GM12878 (cell line): ENCODE measurements at regions of chr14 and their contacts with region 1.

Region 1: DNA sequence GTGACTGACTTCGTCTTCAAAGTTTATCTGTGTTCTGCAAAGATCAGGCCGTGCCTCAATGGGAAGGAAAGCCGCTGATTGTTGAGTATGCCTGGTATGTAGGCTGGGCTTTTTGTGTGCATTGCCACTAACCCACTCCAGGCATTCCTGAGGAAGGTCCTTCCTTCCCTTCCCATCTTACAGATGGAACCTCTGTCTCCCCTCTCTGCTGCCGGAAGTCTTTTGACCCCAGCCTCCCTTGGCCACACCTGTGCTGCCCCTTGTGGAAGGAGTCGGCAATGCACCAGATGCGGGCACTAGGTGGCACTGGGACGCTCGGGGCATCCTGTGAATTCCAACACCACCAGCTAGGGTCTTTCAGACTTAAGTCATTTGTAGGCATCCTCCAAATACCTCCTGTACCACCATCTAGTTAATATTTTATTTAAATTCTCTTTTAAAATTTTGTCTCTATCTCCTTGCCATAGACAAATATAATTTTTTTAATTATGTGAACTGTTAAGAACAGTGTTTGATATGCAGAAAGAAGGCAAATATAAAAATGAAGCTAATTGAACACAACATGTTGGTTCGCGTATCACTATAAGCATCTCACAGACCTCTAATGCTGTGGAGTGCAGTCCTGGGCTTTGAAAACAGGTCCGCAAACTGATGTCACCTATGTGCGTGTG is 99.5 kb downstream of the RIN3 start:
- DNase-seq: no peak
- ATAC-seq: peak; percentile 59
- H3K4me3 ChIP-seq: no peak overlapping the region
- H3K27ac ChIP-seq: no peak overlapping the region
- H3K4me1 ChIP-seq: peaks cover 8% of the 10 kb centered on the region
- H3K27me3 ChIP-seq: no peaks in the 10 kb centered on the region
- CTCF ChIP-seq: peak; percentile 90 to 91 (median 90)
- EP300 ChIP-seq: no peak
- POLR2A ChIP-seq: no peak
- RAD21 ChIP-seq: peak; percentile 81

Region 2: DNA sequence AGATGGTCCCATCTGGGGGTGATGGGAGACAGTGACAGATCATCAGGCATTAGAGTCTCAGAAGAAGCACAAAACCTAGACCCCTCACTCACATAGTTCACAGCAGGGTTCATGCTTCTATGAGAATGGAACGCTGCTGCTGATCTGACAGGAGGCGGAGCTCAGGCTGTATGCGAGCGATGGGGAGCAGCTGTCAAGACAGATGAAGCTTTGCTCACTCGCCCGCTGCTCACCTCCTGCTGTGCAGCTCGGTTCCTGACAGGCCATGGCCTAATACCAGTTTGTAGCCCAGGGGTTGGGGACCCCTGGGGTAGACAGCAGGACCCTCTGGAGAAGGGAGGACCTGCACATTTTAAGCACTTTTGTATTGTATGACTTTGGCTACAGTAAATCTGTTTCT is 24.1 kb after region 1 on chr14:
- CTCF ChIA-PET with region 1: interaction called, 8 read pairs
- POLR2A ChIA-PET with region 1: interaction called, 8 read pairs
- RAD21 ChIA-PET with region 1: interaction called, 12 read pairs
- SMC1A ChIA-PET with region 1: interaction called, 16 read pairs
- in situ Hi-C with region 1: no loop called
- intact Hi-C with region 1: no loop called
- DNase-seq: no peak
- ATAC-seq: no peak
- H3K4me3 ChIP-seq: no peak overlapping the region
- H3K27ac ChIP-seq: no peak overlapping the region
- H3K4me1 ChIP-seq: peaks cover 3% of the 10 kb centered on the region; the same call in 1 of the 2 replicates
- H3K27me3 ChIP-seq: no peaks in the 10 kb centered on the region
- CTCF ChIP-seq: no peak
- EP300 ChIP-seq: no peak
- POLR2A ChIP-seq: no peak
- RAD21 ChIP-seq: no peak

Region 3: DNA sequence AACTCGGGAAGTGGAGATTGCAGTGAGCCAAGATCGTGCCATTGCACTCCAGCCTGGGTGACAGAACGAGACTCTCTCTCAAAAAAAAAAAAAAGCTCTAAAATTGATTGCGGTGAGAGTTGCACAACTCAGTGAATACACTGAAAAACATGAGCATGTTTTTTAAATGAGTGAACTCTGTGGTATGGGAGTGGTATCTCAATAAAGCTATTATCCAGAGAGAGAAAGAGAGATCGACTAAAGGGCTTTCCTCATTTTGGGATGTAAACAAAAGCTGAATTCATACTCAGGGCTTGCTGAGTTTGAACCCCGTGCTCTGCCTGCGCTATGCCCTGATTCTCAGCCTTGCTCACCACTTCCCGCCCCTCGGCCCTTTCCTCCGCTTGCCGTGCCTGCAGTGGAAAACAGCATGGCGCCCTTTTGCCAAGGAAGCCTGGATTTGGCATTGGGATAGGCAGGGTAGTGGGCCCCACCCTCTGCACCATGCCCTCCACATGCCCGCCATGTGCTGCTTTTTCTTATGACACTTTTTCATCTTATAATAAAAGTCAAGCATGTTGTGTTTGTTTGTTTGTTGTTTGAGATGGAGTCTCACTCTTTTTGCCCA is 32.9 kb after region 1 on chr14:
- CTCF ChIA-PET with region 1: interaction called, 40 read pairs
- POLR2A ChIA-PET with region 1: interaction called, 8 read pairs
- RAD21 ChIA-PET with region 1: interaction called, 38 read pairs
- SMC1A ChIA-PET with region 1: interaction called, 38 read pairs
- in situ Hi-C with region 1: no loop called
- intact Hi-C with region 1: no loop called
- DNase-seq: no peak
- ATAC-seq: no peak
- H3K4me3 ChIP-seq: no peak overlapping the region
- H3K27ac ChIP-seq: no peak overlapping the region
- H3K4me1 ChIP-seq: peaks cover 27% of the 10 kb centered on the region
- H3K27me3 ChIP-seq: no peaks in the 10 kb centered on the region
- CTCF ChIP-seq: no peak
- EP300 ChIP-seq: no peak
- POLR2A ChIP-seq: no peak
- RAD21 ChIP-seq: no peak